ENCODE measurements at regions of chr7 and their contacts with region 1.

Region 1: GRCh38 chr7:135121868-135122267 is 26.0 kb upstream of the TMEM140 start:
- DNase-seq: no peak
- H3K4me3 ChIP-seq: no peak overlapping the region
- H3K27ac ChIP-seq: no peak overlapping the region
- H3K4me1 ChIP-seq: no peaks in the 10 kb centered on the region
- H3K27me3 ChIP-seq: no peaks in the 10 kb centered on the region
- CTCF ChIP-seq: no peak
- EP300 ChIP-seq: no peak
- POLR2A ChIP-seq: no peak

Region 2: GRCh38 chr7:135001390-135002165 is 120.3 kb before region 1 on chr7:
- in situ Hi-C with region 1: no loop called
- intact Hi-C with region 1: loop called (anchors 10 kb)
- DNase-seq: no peak
- H3K4me3 ChIP-seq: no peak overlapping the region
- H3K27ac ChIP-seq: no peak overlapping the region
- H3K4me1 ChIP-seq: peaks cover 0 to 3% (median 0%) of the 10 kb centered on the region in 4 donors
- H3K27me3 ChIP-seq: no peaks in the 10 kb centered on the region
- CTCF ChIP-seq: no peak
- EP300 ChIP-seq: no peak
- POLR2A ChIP-seq: no peak

Region 3: DNA sequence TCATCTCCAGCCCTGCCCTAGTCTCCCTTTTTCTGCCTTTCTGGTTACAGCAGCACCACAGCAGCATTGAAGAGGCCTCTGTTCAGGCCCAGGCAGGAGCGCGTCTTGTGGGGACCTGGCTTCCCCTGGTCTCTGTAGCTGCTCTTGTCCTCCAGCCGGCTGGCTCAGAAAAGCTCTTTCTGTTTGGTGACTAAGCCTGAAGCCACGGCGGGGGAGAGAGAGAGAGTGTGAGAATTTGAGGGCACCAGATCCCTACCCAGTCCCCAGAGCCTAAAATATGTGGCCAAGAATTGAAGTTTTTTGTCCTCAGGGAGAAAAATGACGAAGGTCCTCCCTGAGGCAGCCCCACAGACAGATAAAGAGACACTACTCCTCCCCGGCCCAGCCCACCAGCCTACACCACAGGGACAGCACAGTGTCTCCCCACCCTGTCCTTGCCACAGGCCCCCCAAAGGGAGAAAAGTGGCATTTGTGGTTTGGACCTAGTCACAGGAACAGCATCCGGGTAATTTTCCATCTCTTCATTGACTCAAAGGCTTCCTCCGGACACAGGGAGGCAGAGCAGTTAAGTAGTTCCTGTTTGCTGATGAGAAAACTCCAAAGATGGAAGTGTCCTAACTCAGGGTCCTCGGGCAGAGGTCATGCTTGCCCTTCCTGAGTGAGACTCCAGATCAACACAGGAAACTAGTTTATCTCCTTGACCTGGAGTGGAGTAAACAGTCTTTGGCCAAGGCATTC is 640.1 kb after region 1 on chr7:
- in situ Hi-C with region 1: no loop called
- intact Hi-C with region 1: loop called (anchors 5 kb)
- DNase-seq: no peak
- H3K4me3 ChIP-seq: no peak overlapping the region
- H3K27ac ChIP-seq: peak overlapping the region in 2 of 4 donors; percentile 8 to 21
- H3K4me1 ChIP-seq: peaks cover 0 to 5% (median 2%) of the 10 kb centered on the region in 4 donors
- H3K27me3 ChIP-seq: no peaks in the 10 kb centered on the region
- CTCF ChIP-seq: no peak
- EP300 ChIP-seq: no peak
- POLR2A ChIP-seq: no peak

Measured in transverse colon (tissue), 4 donors.